Psoas muscle (tissue), 8 donors: ENCODE measurements at regions of chr5 and their contacts with region 1.

Region 1: GRCh38 chr5:140113699-140114263 is at the start of gene PURA:
- DNase-seq: peak; percentile 96 to 98
- ATAC-seq: peak; percentile 93 to 96 (median 95)
- H3K4me3 ChIP-seq: peak within 1 kb of the TSS; percentile 73
- H3K27ac ChIP-seq: peak within 1 kb of the TSS; percentile 87
- H3K4me1 ChIP-seq: peaks cover 73% of the 10 kb centered on the region
- H3K27me3 ChIP-seq: no peaks in the 10 kb centered on the region
- CTCF ChIP-seq: peak; percentile 16
- total RNA-seq, gene PURA: 11.8 to 20.4 (median 19.3) TPM

Region 2: DNA sequence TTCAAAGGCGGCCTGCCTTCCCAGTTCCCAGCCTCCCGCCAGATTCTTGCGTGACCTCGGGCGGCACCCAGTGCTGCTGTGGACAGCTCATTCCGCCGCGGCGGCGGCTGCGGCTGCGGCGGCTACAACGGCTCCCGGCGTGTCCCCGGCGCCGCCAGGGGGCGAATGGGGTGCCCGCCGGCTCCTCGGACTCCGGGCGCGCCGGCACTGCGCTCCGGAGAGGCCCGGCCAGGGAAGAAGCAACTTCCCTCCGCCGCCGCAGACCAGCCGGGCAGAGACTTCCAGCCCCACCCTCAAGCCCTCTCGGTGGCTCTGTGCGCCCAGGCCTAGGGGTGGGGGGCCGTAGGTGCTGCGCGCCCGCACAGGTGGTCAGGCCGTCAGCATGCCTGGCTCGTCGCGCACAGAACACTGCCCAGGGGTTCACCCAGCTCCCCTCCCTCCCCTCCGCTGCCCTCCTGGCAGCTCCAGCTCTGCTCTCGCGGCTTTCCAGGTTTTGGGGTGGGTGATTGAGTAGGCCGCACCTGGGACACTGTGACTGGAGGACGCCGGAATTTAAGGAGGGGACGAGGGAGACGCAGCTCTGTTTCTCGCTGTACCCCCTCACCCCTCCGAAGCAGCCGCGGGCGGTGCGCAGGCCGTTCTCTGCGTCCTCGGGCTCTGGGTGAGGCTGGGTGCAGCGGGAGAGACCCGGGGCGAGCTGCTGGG is 32.2 kb after region 1 on chr5:
- intact Hi-C with region 1: loop called (anchors 5 kb)
- DNase-seq: peak; percentile 82 to 90
- ATAC-seq: peak; percentile 94 to 97 (median 94)
- H3K4me3 ChIP-seq: peak overlapping the region; percentile 66
- H3K27ac ChIP-seq: no peak overlapping the region
- H3K4me1 ChIP-seq: peaks cover 16% of the 10 kb centered on the region
- H3K27me3 ChIP-seq: no peaks in the 10 kb centered on the region
- CTCF ChIP-seq: peak; percentile 81

Region 3: DNA sequence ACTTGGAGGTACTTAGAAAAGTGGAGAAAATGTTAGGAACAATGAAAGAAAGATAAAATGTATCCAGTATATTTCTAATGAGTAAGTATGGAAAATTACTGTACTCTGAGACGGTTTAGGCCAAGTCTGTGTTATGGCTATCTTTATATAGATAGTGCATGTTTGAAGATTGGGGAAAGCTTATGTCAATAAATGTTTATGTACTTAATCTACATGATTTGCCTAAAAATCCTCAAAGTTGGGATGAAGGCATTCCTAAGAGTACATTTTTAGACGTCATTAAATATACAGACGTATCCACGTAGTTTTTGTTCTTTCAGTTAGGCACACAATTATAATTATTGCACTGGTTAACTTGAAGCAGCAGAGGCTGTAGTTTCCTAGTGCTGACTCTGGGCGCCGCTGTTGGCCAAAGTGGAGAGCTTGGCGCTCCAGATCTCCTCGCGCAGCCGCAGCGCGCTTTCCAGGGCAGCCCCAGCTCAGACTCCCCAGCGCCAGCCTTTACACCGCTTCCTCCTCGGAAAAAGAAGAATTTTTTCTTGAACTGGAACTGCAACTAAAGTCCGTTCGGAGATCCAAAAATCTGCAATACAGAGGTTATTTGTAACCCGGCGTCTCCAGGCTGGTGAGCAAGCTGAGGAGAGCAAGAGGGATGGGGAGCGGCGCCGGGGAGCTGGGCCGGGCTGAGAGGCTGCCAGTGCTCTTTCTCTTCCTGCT is 1273.6 kb after region 1 on chr5 and contains the start of gene PCDHGB4:
- intact Hi-C with region 1: no loop called
- DNase-seq: peak; percentile 40 to 73
- ATAC-seq: peak; percentile 86 to 94 (median 90)
- H3K4me3 ChIP-seq: peak within 1 kb of the TSS; percentile 55
- H3K27ac ChIP-seq: no peak within 1 kb of the TSS
- H3K4me1 ChIP-seq: no peaks in the 10 kb centered on the region
- H3K27me3 ChIP-seq: peaks cover 0 to 42% (median 9%) of the 10 kb centered on the region in 3 donors
- CTCF ChIP-seq: peak; percentile 54
- total RNA-seq, gene PCDHGB4: 0.99 to 3.0 (median 2.0) TPM